Caco-2 (cell line): ENCODE measurements at regions of chr1 and their contacts with region 1.

Region 1: DNA sequence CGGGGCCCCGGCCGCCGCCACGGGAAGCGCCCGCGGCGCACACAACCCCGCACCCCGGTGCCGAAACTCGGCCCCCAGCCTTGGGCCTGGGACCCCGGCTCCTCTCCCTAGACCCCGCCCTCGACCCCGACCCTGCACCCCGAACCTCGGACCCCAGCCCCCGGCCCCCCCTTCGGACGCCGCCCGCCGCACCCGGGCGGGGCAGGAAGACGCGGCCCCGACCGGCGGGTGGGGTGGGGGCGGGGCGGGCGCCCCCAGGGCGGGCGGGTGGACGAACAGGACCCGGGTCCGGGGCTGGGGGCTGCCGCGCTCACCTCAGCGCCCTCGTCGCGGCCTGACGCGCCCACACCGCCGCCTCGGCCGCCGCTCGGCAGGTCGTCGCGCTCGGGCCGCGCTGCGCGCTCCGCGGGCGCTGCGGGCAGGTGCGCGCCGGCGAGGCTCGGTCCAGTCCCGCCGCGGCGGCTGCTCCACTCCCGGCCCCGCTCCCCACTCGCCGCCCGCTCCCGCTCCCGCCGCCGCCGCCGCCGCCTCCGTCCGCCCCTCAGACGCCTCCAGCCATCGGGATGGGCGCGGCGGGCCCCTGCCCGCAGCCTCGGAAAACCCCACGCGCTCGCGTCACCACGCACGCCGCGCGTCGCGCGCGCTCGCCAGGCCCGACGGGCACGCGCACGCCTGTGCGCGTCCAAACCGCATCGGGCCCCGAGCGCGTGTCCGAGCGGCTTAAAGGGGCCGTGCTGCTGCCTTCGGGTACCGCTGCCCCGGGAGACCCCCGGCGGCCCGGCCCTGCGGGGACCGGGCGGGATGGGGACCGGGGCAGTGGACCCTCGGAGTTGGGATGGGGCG is at the start of gene GNB1:
- DNase-seq: peak; percentile 80 to 89
- H3K4me3 ChIP-seq: peak within 1 kb of the TSS; percentile 91
- H3K4me3 Mint-ChIP-seq: peak within 1 kb of the TSS; percentile 96
- H3K27ac Mint-ChIP-seq: peak within 1 kb of the TSS; percentile 85
- H3K4me1 ChIP-seq: peaks cover 43% of the 10 kb centered on the region
- H3K4me1 Mint-ChIP-seq: peaks cover 6% of the 10 kb centered on the region
- H3K27me3 ChIP-seq: no peaks in the 10 kb centered on the region
- H3K27me3 Mint-ChIP-seq: no peaks in the 10 kb centered on the region
- CTCF ChIP-seq: no peak
- total RNA-seq, gene GNB1: 268 and 301 TPM in 2 replicates

Region 2: DNA sequence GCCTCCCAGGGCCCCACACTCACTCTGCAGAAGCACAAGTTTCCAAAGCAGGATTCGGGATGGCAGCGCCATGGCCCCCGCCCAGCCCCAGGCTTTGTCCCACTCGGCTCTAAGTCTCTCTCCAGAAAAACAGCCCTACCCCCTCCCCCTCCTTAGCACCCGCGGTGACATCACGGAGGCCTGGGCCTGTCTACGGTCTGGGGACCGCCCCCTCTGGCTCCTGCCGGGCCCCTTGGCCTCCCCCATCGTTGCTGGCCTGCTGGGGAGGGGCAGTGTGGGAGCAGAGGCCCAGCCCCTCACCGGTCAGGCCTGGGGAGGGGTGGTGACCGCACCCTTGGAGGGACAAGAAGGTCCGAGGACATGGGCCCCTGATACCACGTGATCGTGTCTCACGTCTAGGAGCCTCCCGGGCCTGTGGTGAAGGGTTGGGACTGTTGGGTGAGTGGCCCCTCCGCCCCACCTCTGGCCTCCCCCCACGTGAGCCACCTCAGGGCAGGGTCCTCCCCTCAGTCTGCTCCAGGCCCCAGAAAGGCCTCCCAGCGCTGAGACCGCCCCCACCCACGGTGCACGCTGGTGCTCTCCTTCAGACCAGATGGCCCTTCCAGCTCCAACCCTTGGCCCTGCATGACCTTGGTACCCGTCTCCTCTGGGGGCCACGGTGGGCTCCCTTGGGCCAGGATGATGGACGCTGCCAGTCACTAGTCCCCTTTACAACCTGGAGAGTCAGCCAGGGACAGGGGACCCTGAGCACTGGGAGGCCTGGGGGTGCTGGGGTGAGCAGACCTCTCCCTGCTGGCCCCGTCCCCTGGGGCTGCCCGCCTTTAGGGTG is 532.1 kb before region 1 on chr1 and contains the start of gene MXRA8:
- CTCF ChIA-PET with region 1: no interaction called
- POLR2A ChIA-PET with region 1: no interaction called
- intact Hi-C with region 1: no loop called
- DNase-seq: no peak
- H3K4me3 ChIP-seq: no peak within 1 kb of the TSS
- H3K4me3 Mint-ChIP-seq: peak within 1 kb of the TSS; percentile 56
- H3K27ac Mint-ChIP-seq: peak within 1 kb of the TSS; percentile 30
- H3K4me1 ChIP-seq: peaks cover 29% of the 10 kb centered on the region
- H3K4me1 Mint-ChIP-seq: peaks cover 8% of the 10 kb centered on the region
- H3K27me3 ChIP-seq: no peaks in the 10 kb centered on the region
- H3K27me3 Mint-ChIP-seq: no peaks in the 10 kb centered on the region
- CTCF ChIP-seq: no peak
- total RNA-seq, gene MXRA8: 4.9 and 5.0 TPM in 2 replicates

Region 3: DNA sequence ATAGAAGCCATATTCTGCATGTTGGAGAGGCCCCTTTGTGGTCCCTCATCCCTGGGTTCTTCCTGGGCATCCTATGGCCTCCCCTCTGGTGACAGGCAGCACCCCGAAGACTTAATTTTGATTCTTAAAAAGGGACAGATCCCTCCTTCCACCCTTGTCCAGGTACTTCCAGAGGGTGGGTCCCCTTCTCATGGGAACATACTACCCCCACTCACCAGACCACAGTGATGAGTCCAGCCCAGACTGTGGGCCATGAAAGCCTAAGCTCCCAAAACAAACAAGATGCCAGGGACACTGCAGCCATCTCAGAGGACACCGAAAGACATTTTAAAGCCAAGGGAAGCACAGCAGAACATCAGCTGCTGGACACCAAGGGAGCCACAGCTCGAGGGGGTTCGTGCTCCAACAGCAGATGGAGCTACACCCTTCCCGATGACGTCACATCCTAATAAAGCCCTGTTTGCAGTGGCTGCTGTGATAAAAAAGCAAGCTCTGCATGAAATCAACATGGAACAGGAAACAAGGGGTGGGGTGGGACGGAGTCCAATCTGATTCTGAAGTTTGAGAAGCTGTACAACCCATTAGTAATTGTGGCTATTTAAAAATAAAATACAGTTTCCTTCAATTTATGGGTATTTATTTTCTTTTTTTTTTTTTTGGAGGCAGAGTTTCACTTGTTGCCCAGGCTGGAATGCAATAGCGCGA is 32.2 kb before region 1 on chr1:
- CTCF ChIA-PET with region 1: interaction called, 5 read pairs
- POLR2A ChIA-PET with region 1: no interaction called
- intact Hi-C with region 1: loop called (anchors 2 kb)
- DNase-seq: peak; percentile 57 to 62
- H3K4me3 ChIP-seq: no peak overlapping the region
- H3K4me3 Mint-ChIP-seq: peak overlapping the region; percentile 63
- H3K27ac Mint-ChIP-seq: peak overlapping the region; percentile 95
- H3K4me1 ChIP-seq: peaks cover 29% of the 10 kb centered on the region
- H3K4me1 Mint-ChIP-seq: peaks cover 12% of the 10 kb centered on the region
- H3K27me3 ChIP-seq: no peaks in the 10 kb centered on the region
- H3K27me3 Mint-ChIP-seq: no peaks in the 10 kb centered on the region
- CTCF ChIP-seq: peak in 1 of 2 experiments; percentile 30

Region 4: GRCh38 chr1:1900883-1901640 is 10.3 kb after region 1 on chr1:
- CTCF ChIA-PET with region 1: interaction called, 4 read pairs
- POLR2A ChIA-PET with region 1: interaction called, 11 read pairs
- intact Hi-C with region 1: loop called (anchors 1 kb)
- DNase-seq: no peak
- H3K4me3 ChIP-seq: no peak overlapping the region
- H3K4me3 Mint-ChIP-seq: no peak overlapping the region
- H3K27ac Mint-ChIP-seq: no peak overlapping the region
- H3K4me1 ChIP-seq: peaks cover 11% of the 10 kb centered on the region; the same call in 1 of the 2 replicates
- H3K4me1 Mint-ChIP-seq: peaks cover 1% of the 10 kb centered on the region
- H3K27me3 ChIP-seq: no peaks in the 10 kb centered on the region
- H3K27me3 Mint-ChIP-seq: no peaks in the 10 kb centered on the region
- CTCF ChIP-seq: no peak

Region 5: DNA sequence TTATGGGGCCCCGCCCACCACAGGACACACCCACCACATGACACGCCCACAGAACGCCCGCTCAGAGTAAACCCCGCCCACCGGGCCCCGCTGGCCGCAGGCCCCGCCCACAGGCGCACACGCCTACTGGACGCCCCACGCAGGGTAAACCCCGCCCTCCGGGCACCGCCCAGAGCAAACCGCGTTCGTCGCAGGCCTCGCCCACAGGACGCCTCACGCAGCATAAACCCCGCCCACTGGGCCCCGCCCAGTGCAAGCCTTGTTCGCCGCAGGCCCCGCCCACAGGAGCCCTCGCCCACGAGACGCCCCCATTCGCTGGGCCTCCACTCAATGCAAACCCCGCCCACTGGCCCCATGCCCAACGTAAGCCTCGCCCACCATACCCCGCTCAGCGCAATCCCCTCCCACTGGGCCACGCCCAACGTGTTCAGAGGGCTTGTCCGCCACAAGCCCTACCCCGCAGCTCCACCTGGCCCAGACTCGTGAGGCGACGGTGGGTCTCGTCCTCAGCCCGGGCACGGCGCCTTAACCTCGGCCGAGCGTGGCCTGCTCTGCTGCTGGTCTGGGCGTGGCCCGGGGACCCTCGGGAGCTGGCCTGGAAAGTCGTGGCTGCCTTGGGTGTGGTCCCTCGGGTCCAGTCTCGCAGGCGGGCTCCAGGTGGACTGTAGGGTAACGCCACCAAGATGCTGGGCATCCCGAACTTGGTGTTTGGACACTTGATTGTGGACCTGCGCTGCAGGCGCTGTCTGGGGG is 28.8 kb after region 1 on chr1:
- CTCF ChIA-PET with region 1: no interaction called
- POLR2A ChIA-PET with region 1: no interaction called
- intact Hi-C with region 1: loop called (anchors 1 kb)
- DNase-seq: peak; percentile 98
- H3K4me3 ChIP-seq: peak overlapping the region; percentile 57
- H3K4me3 Mint-ChIP-seq: peak overlapping the region; percentile 58
- H3K27ac Mint-ChIP-seq: no peak overlapping the region
- H3K4me1 ChIP-seq: peaks cover 20% of the 10 kb centered on the region; the same call in 1 of the 2 replicates
- H3K4me1 Mint-ChIP-seq: no peaks in the 10 kb centered on the region
- H3K27me3 ChIP-seq: no peaks in the 10 kb centered on the region
- H3K27me3 Mint-ChIP-seq: no peaks in the 10 kb centered on the region
- CTCF ChIP-seq: no peak

Region 6: GRCh38 chr1:1929639-1930471 is 39.1 kb after region 1 on chr1:
- CTCF ChIA-PET with region 1: no interaction called
- POLR2A ChIA-PET with region 1: no interaction called
- intact Hi-C with region 1: no loop called
- DNase-seq: no peak
- H3K4me3 ChIP-seq: no peak overlapping the region
- H3K4me3 Mint-ChIP-seq: no peak overlapping the region
- H3K27ac Mint-ChIP-seq: no peak overlapping the region
- H3K4me1 ChIP-seq: no peaks in the 10 kb centered on the region
- H3K4me1 Mint-ChIP-seq: no peaks in the 10 kb centered on the region
- H3K27me3 ChIP-seq: no peaks in the 10 kb centered on the region
- H3K27me3 Mint-ChIP-seq: no peaks in the 10 kb centered on the region
- CTCF ChIP-seq: no peak